ENCODE measurements at regions of chr9 and their contacts with region 1.

Region 1: DNA sequence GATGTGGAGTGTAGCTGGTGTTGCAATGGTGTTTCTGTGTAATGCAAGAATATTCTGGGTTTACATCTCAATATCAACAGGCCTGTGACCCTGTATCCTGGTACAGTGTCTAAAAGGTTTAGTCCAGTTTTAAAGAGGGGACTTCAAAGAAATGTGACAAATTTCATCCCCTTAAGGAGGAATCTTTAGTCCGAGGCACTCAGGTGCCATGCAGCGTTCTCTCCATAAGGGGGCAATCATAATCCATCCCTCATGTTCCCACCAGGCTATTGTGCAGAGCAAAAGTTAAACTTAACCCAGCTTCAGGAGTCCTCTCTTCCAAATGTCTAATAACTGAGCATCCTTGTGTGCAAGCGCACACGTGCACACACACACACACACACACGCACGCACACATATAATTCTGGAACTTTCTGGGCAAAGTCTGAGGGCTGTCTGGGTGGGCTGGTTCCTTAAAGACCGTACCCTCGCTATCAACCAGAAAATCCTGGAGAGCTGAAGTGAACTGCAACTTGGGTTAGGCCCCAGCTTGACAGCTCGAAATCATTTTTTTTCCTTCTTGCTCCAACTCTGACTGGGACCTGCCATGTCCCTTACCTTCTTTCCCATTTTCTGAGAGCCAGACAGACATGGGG is 46.0 kb downstream of the CRB2 start:
- DNase-seq: no peak
- H3K4me3 ChIP-seq: no peak overlapping the region
- H3K27ac ChIP-seq: no peak overlapping the region
- H3K4me1 ChIP-seq: peaks cover 0 to 11% (median 9%) of the 10 kb centered on the region in 4 experiments; a peak in 6 of 7 replicates
- H3K27me3 ChIP-seq: no peaks in the 10 kb centered on the region; a peak in 1 of 7 replicates
- CTCF ChIP-seq: peak; percentile 57 to 90 (median 73)
- EP300 ChIP-seq: no peak
- POLR2A ChIP-seq: no peak
- RAD21 ChIP-seq: peak; percentile 89 to 93

Region 2: GRCh38 chr9:123269316-123269715 is 132.7 kb before region 1 on chr9:
- CTCF ChIA-PET with region 1: no interaction called
- POLR2A ChIA-PET with region 1: no interaction called
- DNase-seq: no peak
- H3K4me3 ChIP-seq: peak overlapping the region; percentile 42 to 99 (median 60)
- H3K27ac ChIP-seq: no peak overlapping the region
- H3K4me1 ChIP-seq: peaks cover 0 to 27% (median 8%) of the 10 kb centered on the region in 4 experiments; a peak in 6 of 7 replicates
- H3K27me3 ChIP-seq: no peaks in the 10 kb centered on the region
- CTCF ChIP-seq: no peak
- EP300 ChIP-seq: no peak
- POLR2A ChIP-seq: no peak
- RAD21 ChIP-seq: no peak

Region 3: GRCh38 chr9:123382653-123383511 is 19.1 kb before region 1 on chr9:
- CTCF ChIA-PET with region 1: interaction called, 14 read pairs
- POLR2A ChIA-PET with region 1: interaction called, 3 read pairs
- DNase-seq: no peak
- H3K4me3 ChIP-seq: no peak overlapping the region
- H3K27ac ChIP-seq: no peak overlapping the region
- H3K4me1 ChIP-seq: no peaks in the 10 kb centered on the region; a peak in 2 of 7 replicates
- H3K27me3 ChIP-seq: no peaks in the 10 kb centered on the region; a peak in 1 of 7 replicates
- CTCF ChIP-seq: no peak
- EP300 ChIP-seq: no peak
- POLR2A ChIP-seq: no peak
- RAD21 ChIP-seq: no peak

Region 4: GRCh38 chr9:123414946-123415821 is 13.2 kb after region 1 on chr9:
- CTCF ChIA-PET with region 1: interaction called, 40 read pairs
- POLR2A ChIA-PET with region 1: interaction called, 3 read pairs
- DNase-seq: no peak
- H3K4me3 ChIP-seq: no peak overlapping the region
- H3K27ac ChIP-seq: no peak overlapping the region
- H3K4me1 ChIP-seq: peaks cover 0 to 7% (median 2%) of the 10 kb centered on the region in 4 experiments; a peak in 4 of 7 replicates
- H3K27me3 ChIP-seq: no peaks in the 10 kb centered on the region
- CTCF ChIP-seq: no peak
- EP300 ChIP-seq: no peak
- POLR2A ChIP-seq: no peak
- RAD21 ChIP-seq: no peak

Region 5: GRCh38 chr9:123426401-123426800 is 24.4 kb after region 1 on chr9:
- CTCF ChIA-PET with region 1: interaction called, 15 read pairs
- POLR2A ChIA-PET with region 1: interaction called, 5 read pairs
- DNase-seq: no peak
- H3K4me3 ChIP-seq: no peak overlapping the region
- H3K27ac ChIP-seq: no peak overlapping the region
- H3K4me1 ChIP-seq: peaks cover 5 to 13% (median 11%) of the 10 kb centered on the region in 4 experiments
- H3K27me3 ChIP-seq: no peaks in the 10 kb centered on the region
- CTCF ChIP-seq: peak; percentile 15 to 36 (median 30); a peak in 3 of 4 replicates
- EP300 ChIP-seq: no peak
- POLR2A ChIP-seq: no peak
- RAD21 ChIP-seq: no peak

Region 6: DNA sequence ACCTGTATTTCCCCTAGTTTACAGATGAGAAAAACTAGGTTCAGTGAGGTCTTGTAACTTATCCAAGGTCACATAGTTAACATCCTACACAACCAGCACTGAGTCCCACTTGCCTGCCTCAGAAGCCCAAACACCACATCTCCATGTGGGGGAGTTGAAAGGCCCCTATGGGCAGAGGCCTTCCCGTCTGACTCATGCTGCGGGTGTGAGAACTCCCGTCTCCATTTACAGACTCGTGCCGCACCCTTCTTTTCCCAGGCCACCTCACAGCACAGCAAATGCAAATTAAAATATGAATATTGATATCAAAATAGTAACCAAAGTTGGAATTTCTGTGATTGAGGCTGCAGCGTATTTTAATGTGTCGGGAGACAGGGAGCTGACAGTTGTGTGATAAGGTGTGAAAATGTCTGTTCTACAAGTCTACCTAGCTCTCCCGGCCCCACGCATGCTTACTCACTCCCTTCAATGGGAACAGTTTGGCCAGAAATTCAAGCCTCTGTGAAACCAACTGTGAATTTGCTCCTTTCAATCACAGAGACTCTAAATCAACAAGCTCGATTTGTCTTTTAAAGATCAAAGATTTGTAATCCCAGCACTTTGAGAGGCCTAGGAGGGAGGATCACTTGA is 44.1 kb after region 1 on chr9:
- CTCF ChIA-PET with region 1: interaction called, 17 read pairs
- POLR2A ChIA-PET with region 1: no interaction called
- DNase-seq: no peak
- H3K4me3 ChIP-seq: no peak overlapping the region
- H3K27ac ChIP-seq: no peak overlapping the region
- H3K4me1 ChIP-seq: peaks cover 0 to 2% (median 0%) of the 10 kb centered on the region in 4 experiments; a peak in 2 of 7 replicates
- H3K27me3 ChIP-seq: no peaks in the 10 kb centered on the region
- CTCF ChIP-seq: no peak
- EP300 ChIP-seq: no peak
- POLR2A ChIP-seq: no peak
- RAD21 ChIP-seq: no peak

Region 7: GRCh38 chr9:123544007-123544827 is 142.2 kb after region 1 on chr9:
- CTCF ChIA-PET with region 1: interaction called, 22 read pairs
- POLR2A ChIA-PET with region 1: no interaction called
- DNase-seq: no peak
- H3K4me3 ChIP-seq: no peak overlapping the region
- H3K27ac ChIP-seq: no peak overlapping the region
- H3K4me1 ChIP-seq: no peaks in the 10 kb centered on the region
- H3K27me3 ChIP-seq: no peaks in the 10 kb centered on the region
- CTCF ChIP-seq: peak in 2 of 3 experiments; percentile 71 to 73; a peak in 3 of 4 replicates
- EP300 ChIP-seq: no peak
- POLR2A ChIP-seq: no peak
- RAD21 ChIP-seq: peak; percentile 95 to 98

Region 8: GRCh38 chr9:123564652-123565051 is 162.7 kb after region 1 on chr9:
- CTCF ChIA-PET with region 1: no interaction called
- POLR2A ChIA-PET with region 1: no interaction called
- DNase-seq: no peak
- H3K4me3 ChIP-seq: no peak overlapping the region
- H3K27ac ChIP-seq: no peak overlapping the region
- H3K4me1 ChIP-seq: peaks cover 0 to 9% (median 3%) of the 10 kb centered on the region in 4 experiments; a peak in 4 of 7 replicates
- H3K27me3 ChIP-seq: no peaks in the 10 kb centered on the region
- CTCF ChIP-seq: no peak
- EP300 ChIP-seq: no peak
- POLR2A ChIP-seq: no peak
- RAD21 ChIP-seq: no peak

Measured in H1 (cell line).